ENCODE measurements at regions of chr12 and their contacts with region 1.

Region 1: GRCh38 chr12:108457006-108457733 is 57.9 kb upstream of the FICD start:
- DNase-seq: peak in 1 of 2 donors; percentile 19
- ATAC-seq: peak; percentile 55 to 82 (median 76)
- H3K4me3 ChIP-seq: no peak overlapping the region
- H3K27ac ChIP-seq: no peak overlapping the region
- H3K4me1 ChIP-seq: peaks cover 0 to 5% (median 0%) of the 10 kb centered on the region in 9 donors
- H3K27me3 ChIP-seq: peaks cover 0 to 33% (median 20%) of the 10 kb centered on the region in 7 donors
- CTCF ChIP-seq: peak; percentile 52 to 79 (median 75)

Region 2: GRCh38 chr12:108099073-108099472 is 358.1 kb before region 1 on chr12:
- intact Hi-C with region 1: loop called in 8 of 10 experiments (anchors 5 to 10 kb)
- DNase-seq: no peak
- ATAC-seq: no peak
- H3K4me3 ChIP-seq: no peak overlapping the region
- H3K27ac ChIP-seq: no peak overlapping the region
- H3K4me1 ChIP-seq: no peaks in the 10 kb centered on the region
- H3K27me3 ChIP-seq: peaks cover 0 to 52% (median 31%) of the 10 kb centered on the region in 7 donors
- CTCF ChIP-seq: peak in 8 of 9 donors; percentile 12 to 56 (median 39)

Region 3: DNA sequence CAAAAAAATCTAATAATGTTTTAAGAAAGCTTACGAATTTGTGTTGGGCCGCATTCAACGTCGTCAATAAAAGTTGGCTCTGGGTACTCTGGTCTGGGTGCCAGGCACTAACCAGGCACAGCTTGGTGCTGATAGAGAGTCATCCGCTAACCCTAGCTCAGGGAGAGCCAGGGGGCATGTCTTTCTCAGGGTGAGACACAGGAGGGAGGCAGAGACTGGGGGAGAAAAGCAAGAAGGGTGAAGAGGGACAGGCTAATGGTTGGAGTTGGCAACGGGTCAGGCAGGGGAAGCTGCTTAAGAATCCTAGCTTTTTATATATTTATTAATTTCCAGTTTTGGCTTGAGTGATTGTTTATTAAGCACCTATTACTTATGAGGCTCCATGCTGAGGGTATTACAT is 223.0 kb before region 1 on chr12:
- intact Hi-C with region 1: loop called in 8 of 10 experiments (anchors 5 to 10 kb)
- DNase-seq: peak in 1 of 2 donors; percentile 27
- ATAC-seq: peak in 6 of 8 donors; percentile 62 to 80 (median 72)
- H3K4me3 ChIP-seq: no peak overlapping the region
- H3K27ac ChIP-seq: no peak overlapping the region
- H3K4me1 ChIP-seq: no peaks in the 10 kb centered on the region
- H3K27me3 ChIP-seq: peaks cover 0 to 35% (median 21%) of the 10 kb centered on the region in 7 donors
- CTCF ChIP-seq: peak in 8 of 9 donors; percentile 16 to 62 (median 45)

Region 4: DNA sequence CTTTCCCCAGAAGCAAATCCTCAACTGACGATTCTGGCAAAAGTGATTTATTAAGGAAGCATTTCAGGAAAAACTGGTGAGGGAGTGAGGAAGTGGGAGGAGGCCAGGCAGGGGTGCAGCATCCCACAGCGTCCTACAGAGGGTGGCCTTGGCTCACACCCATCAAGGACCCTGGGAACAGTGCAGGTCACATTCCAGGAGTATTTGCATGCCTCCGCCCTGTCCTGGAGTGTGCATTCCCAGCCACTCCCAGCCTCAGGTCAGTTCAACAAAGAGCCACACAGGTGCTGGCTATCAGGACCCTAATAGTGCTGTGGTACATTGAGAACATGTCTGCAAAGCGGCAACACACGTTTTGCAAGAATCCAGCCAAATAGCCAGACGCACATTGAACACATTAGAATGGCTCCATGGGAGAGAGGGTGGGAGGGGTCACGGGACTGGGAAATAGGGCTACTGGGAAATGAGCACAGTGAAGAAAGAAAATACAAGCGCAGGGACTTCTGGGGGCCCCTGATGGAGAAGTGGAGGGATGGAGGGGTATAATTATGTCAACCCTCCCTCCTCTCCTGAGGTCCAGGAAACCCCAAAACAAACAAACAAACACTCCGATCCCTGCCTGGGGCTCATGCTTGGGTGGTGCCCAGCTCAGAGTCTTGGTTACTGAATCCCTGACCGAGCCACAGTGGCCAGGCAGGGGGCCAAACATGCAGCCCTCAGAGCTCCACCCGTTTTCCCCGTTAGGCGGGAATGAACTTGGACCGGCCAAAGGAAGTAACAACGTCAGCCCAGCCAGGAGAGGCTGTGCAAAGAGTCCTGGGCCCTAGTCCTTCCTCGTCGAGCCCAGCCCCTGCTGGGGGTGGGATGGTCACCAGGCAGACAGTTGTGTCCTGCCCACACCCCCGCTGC is 154.5 kb before region 1 on chr12:
- intact Hi-C with region 1: loop called in 1 of 10 experiments (anchors 5 kb)
- DNase-seq: peak; percentile 81 to 88
- ATAC-seq: peak; percentile 65 to 86 (median 80)
- H3K4me3 ChIP-seq: no peak overlapping the region
- H3K27ac ChIP-seq: peak overlapping the region; percentile 51 to 95 (median 86)
- H3K4me1 ChIP-seq: peaks cover 35 to 98% (median 58%) of the 10 kb centered on the region in 9 donors
- H3K27me3 ChIP-seq: no peaks in the 10 kb centered on the region
- CTCF ChIP-seq: peak in 4 of 9 donors; percentile 10 to 38 (median 21)